Activated naive CD4-positive, alpha-beta T cell treated with anti-CD3 and anti-CD28 coated beads for 36 hours (primary cell): ENCODE measurements at regions of chr6 and their contacts with region 1.

Region 1: GRCh38 chr6:83067448-83068413 is at the start of gene DOP1A:
- DNase-seq: peak; percentile 98
- H3K4me3 Mint-ChIP-seq: peak within 1 kb of the TSS; percentile 87
- H3K27ac Mint-ChIP-seq: peak within 1 kb of the TSS; percentile 76
- H3K4me1 Mint-ChIP-seq: peaks cover 40% of the 10 kb centered on the region
- H3K27me3 Mint-ChIP-seq: no peaks in the 10 kb centered on the region
- total RNA-seq, gene DOP1A: 5.0 to 6.5 TPM

Region 2: DNA sequence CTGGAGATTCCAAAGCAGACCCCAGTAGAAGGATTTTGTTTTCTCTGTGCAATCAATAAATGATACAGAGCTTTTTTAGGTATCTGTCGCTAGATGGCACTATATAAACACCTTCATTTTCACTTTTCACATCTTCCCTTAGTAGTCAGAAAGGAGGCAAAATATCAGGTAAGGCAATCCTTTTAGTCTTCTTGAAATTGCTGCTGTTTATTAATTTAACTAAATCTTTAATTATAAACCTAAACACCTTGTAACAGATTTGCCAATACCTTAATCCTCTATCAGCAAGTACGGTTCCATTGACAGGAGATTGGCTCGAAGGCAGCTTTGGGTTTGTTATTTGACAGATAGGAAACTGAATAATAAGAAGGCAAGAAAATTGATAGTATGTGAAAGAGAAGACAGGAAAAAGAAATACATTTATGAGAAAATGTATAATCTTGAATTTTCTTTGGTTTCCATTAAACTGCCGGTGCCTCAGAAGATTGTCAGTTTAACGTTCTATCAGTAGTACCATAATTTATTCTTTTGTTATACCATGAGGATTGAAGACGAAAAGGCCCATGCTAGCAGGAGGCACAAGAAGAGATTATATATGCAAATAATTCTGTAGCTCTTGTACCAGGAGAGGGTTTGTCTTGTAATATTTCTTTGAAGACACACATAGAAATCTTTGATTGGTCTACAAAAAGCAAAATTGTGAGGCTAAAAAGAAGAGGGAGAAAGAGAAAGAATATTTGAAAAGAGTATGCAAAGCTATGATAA is 796.7 kb before region 1 on chr6:
- CTCF ChIA-PET with region 1: interaction called, 16 read pairs
- intact Hi-C with region 1: no loop called
- DNase-seq: no peak
- H3K4me3 Mint-ChIP-seq: no peak overlapping the region
- H3K27ac Mint-ChIP-seq: no peak overlapping the region
- H3K4me1 Mint-ChIP-seq: no peaks in the 10 kb centered on the region
- H3K27me3 Mint-ChIP-seq: no peaks in the 10 kb centered on the region

Region 3: DNA sequence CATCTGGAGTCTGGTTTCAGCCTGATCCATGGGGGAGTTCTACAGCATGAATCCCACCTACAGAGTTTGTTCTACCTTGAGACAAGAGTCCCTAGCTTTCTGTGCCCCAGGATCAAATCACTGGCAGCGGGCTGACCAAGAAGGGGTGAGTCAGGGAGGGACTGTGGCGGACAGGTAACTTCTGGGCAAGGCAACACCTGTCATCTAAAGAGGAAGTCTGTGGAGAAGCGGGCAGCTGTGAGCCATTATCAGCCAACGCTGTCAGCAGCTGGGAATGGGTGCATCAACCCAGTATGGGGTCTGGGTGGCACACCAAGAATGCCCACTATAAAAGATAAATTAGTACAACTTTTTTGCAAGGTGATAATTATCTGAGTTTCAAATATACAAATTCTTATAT is 48.0 kb before region 1 on chr6:
- CTCF ChIA-PET with region 1: no interaction called
- intact Hi-C with region 1: no loop called
- DNase-seq: no peak
- H3K4me3 Mint-ChIP-seq: no peak overlapping the region
- H3K27ac Mint-ChIP-seq: no peak overlapping the region
- H3K4me1 Mint-ChIP-seq: no peaks in the 10 kb centered on the region
- H3K27me3 Mint-ChIP-seq: no peaks in the 10 kb centered on the region

Region 4: GRCh38 chr6:83090120-83090519 is 22.4 kb after region 1 on chr6:
- CTCF ChIA-PET with region 1: interaction called, 11 read pairs
- intact Hi-C with region 1: no loop called
- DNase-seq: no peak
- H3K4me3 Mint-ChIP-seq: no peak overlapping the region
- H3K27ac Mint-ChIP-seq: no peak overlapping the region
- H3K4me1 Mint-ChIP-seq: peaks cover 11% of the 10 kb centered on the region
- H3K27me3 Mint-ChIP-seq: no peaks in the 10 kb centered on the region

Region 5: GRCh38 chr6:83192871-83193746 is 125.4 kb after region 1 on chr6 and contains the starts of genes PGM3 and RWDD2A:
- CTCF ChIA-PET with region 1: interaction called, 68 read pairs
- intact Hi-C with region 1: loop called (anchors 1 kb)
- DNase-seq: peak; percentile 91
- H3K4me3 Mint-ChIP-seq: peak within 1 kb of the TSS; percentile 96
- H3K27ac Mint-ChIP-seq: peak within 1 kb of the TSS; percentile 89
- H3K4me1 Mint-ChIP-seq: peaks cover 38% of the 10 kb centered on the region
- H3K27me3 Mint-ChIP-seq: peaks cover 2% of the 10 kb centered on the region
- total RNA-seq, gene PGM3: 17.0 to 19.8 TPM
- total RNA-seq, gene RWDD2A: 1.4 TPM

Region 6: DNA sequence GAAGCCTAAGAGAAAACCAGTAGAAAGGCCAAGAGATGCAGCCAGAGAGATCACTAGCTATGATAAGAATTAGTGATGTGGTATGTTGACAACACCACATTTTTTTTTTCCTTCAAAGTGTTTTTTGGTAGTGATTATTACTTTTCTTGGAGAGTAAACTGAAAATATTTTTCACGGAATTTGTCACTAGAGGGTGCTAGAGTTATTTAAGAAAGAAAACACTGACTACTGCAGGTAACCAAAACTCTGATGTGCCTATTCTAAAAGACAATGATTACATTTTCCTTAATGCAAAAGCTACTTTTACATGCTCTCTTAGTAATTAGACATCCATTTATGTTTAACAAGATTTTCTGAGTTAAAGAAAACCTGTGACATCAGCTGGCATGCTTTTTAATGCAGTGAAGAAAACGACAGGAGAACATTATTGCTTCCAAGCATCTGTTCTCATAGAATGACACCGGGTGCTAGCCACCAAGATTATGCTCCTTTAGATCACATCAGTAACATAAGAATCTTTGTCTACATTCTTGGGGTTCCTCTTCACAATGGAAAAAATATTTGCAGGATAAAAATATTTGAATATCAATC is 154.3 kb after region 1 on chr6:
- CTCF ChIA-PET with region 1: interaction called, 149 read pairs
- intact Hi-C with region 1: no loop called
- DNase-seq: no peak
- H3K4me3 Mint-ChIP-seq: no peak overlapping the region
- H3K27ac Mint-ChIP-seq: no peak overlapping the region
- H3K4me1 Mint-ChIP-seq: no peaks in the 10 kb centered on the region
- H3K27me3 Mint-ChIP-seq: no peaks in the 10 kb centered on the region

Region 7: DNA sequence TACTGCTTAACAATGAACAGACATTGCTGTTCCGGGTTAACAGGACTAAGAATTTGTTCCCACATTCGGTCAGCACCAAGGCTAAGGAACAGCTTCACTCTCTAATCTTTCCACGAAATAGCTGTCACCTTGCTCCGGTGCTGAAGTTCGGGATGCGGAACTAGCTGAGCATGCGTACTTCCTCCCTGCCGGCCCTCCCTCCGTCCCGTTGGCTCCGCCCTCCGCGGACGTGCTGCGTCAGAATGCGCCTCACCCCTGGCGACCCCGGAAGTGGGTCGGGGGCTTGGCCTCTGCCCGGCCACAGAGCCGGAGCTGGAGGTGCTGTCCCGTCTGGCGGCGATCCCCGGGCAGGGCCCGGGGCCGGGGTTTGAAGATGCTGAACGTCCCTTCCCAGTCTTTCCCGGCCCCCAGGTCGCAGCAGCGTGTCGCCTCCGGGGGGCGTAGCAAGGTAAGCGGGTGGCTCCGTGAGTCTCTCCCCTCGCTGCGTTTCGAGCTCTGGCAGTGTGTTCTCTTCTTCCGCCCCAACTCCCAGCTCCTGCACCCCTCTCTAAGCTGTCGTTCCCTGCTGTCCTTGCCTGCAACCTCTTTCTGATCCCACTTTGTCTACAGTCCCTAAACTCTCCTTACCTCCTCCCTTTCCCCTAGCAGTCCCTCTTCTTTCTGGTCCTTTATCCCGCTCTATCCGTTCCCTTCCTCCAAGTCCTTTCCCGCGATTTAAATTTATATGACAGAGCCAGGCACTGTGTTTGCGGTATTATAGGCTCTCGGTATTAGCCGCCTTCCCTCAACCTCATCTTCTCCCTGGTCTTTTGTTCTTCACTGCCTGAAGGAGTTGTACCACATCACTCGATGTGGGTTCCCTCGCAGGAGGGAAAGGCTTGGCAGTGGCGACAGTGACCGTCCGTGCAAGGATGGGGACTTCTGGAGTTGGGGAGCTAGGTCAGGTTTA is 792.0 kb after region 1 on chr6 and contains the start of gene CYB5R4:
- CTCF ChIA-PET with region 1: no interaction called
- intact Hi-C with region 1: loop called (anchors 5 kb)
- DNase-seq: peak; percentile 96
- H3K4me3 Mint-ChIP-seq: peak within 1 kb of the TSS; percentile 100
- H3K27ac Mint-ChIP-seq: peak within 1 kb of the TSS; percentile 82
- H3K4me1 Mint-ChIP-seq: peaks cover 28% of the 10 kb centered on the region
- H3K27me3 Mint-ChIP-seq: peaks cover 12% of the 10 kb centered on the region
- total RNA-seq, gene CYB5R4: 23.5 to 24.5 TPM

Region 8: GRCh38 chr6:85015396-85015990 is 1947.8 kb after region 1 on chr6:
- CTCF ChIA-PET with region 1: no interaction called
- intact Hi-C with region 1: loop called (anchors 5 kb)
- DNase-seq: peak; percentile 6
- H3K4me3 Mint-ChIP-seq: no peak overlapping the region
- H3K27ac Mint-ChIP-seq: no peak overlapping the region
- H3K4me1 Mint-ChIP-seq: no peaks in the 10 kb centered on the region
- H3K27me3 Mint-ChIP-seq: peaks cover 13% of the 10 kb centered on the region